HCT116 (cell line): ENCODE measurements at regions of chr21 and their contacts with region 1.

Region 1: DNA sequence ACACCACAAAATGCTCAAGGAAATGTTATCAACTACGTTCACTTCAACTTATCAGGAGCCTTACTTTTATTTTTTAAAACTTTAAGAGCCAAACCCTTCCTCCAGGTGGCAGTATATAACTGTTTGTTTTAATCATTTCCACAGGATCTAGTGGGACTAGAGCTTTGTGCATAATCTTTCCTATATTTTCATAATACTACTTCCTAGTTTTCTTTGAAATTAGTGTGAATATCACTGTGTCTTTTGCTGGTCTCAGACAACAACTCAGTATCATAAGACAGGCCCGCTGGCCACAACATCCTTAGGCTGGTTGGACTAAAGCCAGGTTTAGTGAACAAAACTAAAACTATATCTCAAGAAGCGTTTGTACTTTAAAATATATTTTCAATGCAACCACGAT is 145.5 kb downstream of the TIAM1 start:
- DNase-seq: peak; percentile 48
- ATAC-seq: peak; percentile 76
- H3K4me3 ChIP-seq: no peak overlapping the region
- H3K27ac ChIP-seq: no peak overlapping the region
- H3K4me1 ChIP-seq: peaks cover 13% of the 10 kb centered on the region in 2 experiments
- H3K27me3 ChIP-seq: no peaks in the 10 kb centered on the region
- CTCF ChIP-seq: peak; percentile 48 to 71 (median 62); a peak in 5 of 6 replicates
- POLR2A ChIP-seq: no peak
- RAD21 ChIP-seq: peak; percentile 78

Region 2: DNA sequence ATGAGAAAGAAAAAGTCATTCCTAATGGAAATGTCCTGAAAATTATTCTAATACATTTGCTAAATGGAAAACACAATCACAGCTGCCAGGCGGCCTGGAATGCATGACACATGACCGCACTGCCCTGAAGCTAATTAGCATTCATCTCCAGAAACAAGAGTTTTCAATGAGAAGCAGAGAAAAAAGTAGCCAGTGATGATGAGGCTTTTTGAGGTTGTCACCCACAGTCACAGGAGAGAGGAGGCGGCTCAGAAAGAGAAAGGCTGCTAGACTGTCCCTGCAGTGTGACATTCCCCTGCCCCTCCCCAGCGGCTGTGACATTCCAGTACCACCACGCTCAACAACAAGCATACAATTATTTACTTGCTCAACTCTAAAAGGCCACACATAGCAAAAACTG is 37.4 kb before region 1 on chr21:
- CTCF ChIA-PET with region 1: no interaction called
- POLR2A ChIA-PET with region 1: no interaction called
- RAD21 ChIA-PET with region 1: no interaction called
- intact Hi-C with region 1: no loop called
- DNase-seq: no peak
- ATAC-seq: no peak
- H3K4me3 ChIP-seq: no peak overlapping the region
- H3K27ac ChIP-seq: no peak overlapping the region
- H3K4me1 ChIP-seq: no peaks in the 10 kb centered on the region
- H3K27me3 ChIP-seq: no peaks in the 10 kb centered on the region
- CTCF ChIP-seq: no peak
- POLR2A ChIP-seq: no peak
- RAD21 ChIP-seq: no peak

Region 3: GRCh38 chr21:31293986-31294385 is 95.4 kb after region 1 on chr21:
- CTCF ChIA-PET with region 1: no interaction called
- POLR2A ChIA-PET with region 1: no interaction called
- RAD21 ChIA-PET with region 1: no interaction called
- intact Hi-C with region 1: no loop called
- DNase-seq: peak; percentile 64
- ATAC-seq: peak; percentile 87
- H3K4me3 ChIP-seq: peak overlapping the region in 1 of 2 experiments; percentile 17; a peak in 2 of 4 replicates
- H3K27ac ChIP-seq: peak overlapping the region; percentile 48
- H3K4me1 ChIP-seq: peaks cover 14 to 35% of the 10 kb centered on the region in 2 experiments
- H3K27me3 ChIP-seq: no peaks in the 10 kb centered on the region
- CTCF ChIP-seq: no peak
- POLR2A ChIP-seq: no peak
- RAD21 ChIP-seq: no peak

Region 4: DNA sequence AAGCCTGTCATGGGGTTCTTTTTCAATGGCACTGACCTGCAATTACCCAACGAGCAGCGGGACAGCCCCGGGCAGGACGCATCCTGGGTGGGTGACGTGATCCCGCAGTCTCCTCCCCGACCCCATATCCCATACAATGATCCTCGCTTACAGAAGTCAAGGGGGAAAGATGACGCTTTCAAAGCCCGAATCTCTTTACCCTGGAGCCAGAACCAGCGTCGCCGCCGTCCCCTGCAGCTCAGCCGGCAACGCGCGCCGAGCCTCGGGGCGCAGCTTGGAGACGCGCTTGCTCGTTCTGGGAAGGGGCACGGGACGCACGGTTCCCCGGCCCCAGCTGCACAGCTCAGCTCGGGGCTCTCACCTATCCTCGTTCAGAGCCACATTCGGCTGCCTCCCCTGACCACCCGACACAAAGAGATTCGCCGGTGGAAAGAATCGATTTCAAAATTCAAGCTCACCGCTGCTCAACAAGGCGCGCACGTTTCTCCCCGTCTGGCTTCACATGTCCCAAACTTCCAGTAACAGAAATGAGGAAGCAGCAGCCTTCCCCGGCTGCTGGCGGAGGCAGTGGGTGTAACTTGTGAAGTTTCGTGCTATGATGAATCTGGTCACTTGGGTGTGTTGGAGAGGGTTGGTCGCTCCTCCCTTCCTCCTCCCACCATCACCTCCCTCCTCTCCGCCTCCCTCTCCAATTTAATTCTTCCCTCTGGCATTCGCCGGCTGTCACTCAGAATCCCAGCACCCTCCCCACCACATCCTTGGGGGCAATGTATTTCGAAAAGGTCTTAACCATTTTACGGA is 145.3 kb after region 1 on chr21 and contains the start of gene TIAM1:
- CTCF ChIA-PET with region 1: interaction called, 6 read pairs
- POLR2A ChIA-PET with region 1: no interaction called
- RAD21 ChIA-PET with region 1: no interaction called
- intact Hi-C with region 1: loop called (anchors 10 kb)
- DNase-seq: no peak
- ATAC-seq: peak; percentile 88
- H3K4me3 ChIP-seq: peak within 1 kb of the TSS; percentile 31 to 37
- H3K27ac ChIP-seq: peak within 1 kb of the TSS; percentile 5; the same call in 1 of the 2 replicates
- H3K4me1 ChIP-seq: peaks cover 27 to 43% of the 10 kb centered on the region in 2 experiments
- H3K27me3 ChIP-seq: no peaks in the 10 kb centered on the region
- CTCF ChIP-seq: no peak
- POLR2A ChIP-seq: no peak
- RAD21 ChIP-seq: no peak
- total RNA-seq, gene TIAM1: 47.8 TPM

Region 5: DNA sequence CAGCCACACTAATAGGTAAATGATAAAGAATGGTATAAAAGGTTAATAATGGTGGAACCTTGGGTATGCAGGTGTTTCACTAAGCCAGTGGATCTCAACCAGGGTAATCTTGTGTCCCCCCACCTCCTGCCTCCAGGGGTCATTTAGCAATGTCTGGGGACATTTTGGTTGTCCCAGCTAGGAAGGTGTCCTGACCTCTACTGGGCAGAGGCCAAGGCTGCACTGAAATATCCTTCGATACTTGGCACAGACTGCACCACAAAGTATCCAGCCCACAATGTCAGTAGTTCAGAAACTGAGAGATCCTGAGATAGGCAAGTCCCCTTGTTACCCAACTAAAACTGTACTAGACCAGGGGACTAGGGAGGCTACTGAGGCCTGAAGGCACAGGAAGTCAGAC is 259.1 kb after region 1 on chr21:
- CTCF ChIA-PET with region 1: interaction called, 3 read pairs
- POLR2A ChIA-PET with region 1: no interaction called
- RAD21 ChIA-PET with region 1: no interaction called
- intact Hi-C with region 1: loop called (anchors 5 kb)
- DNase-seq: no peak
- ATAC-seq: peak; percentile 64
- H3K4me3 ChIP-seq: no peak overlapping the region
- H3K27ac ChIP-seq: no peak overlapping the region
- H3K4me1 ChIP-seq: peaks cover 7 to 17% of the 10 kb centered on the region in 2 experiments; a peak in 2 of 4 replicates
- H3K27me3 ChIP-seq: no peaks in the 10 kb centered on the region
- CTCF ChIP-seq: peak; percentile 22 to 61 (median 53); a peak in 5 of 6 replicates
- POLR2A ChIP-seq: no peak
- RAD21 ChIP-seq: no peak; the same call in 1 of the 2 replicates

Region 6: GRCh38 chr21:31509194-31510017 is 310.8 kb after region 1 on chr21:
- CTCF ChIA-PET with region 1: no interaction called
- POLR2A ChIA-PET with region 1: no interaction called
- RAD21 ChIA-PET with region 1: no interaction called
- intact Hi-C with region 1: loop called (anchors 1 kb)
- DNase-seq: peak; percentile 67
- ATAC-seq: peak; percentile 85
- H3K4me3 ChIP-seq: peak overlapping the region in 1 of 2 experiments; percentile 41; a peak in 2 of 4 replicates
- H3K27ac ChIP-seq: peak overlapping the region; percentile 69
- H3K4me1 ChIP-seq: peaks cover 43 to 59% of the 10 kb centered on the region in 2 experiments
- H3K27me3 ChIP-seq: no peaks in the 10 kb centered on the region
- CTCF ChIP-seq: peak; percentile 60 to 78 (median 77); a peak in 5 of 6 replicates
- POLR2A ChIP-seq: no peak
- RAD21 ChIP-seq: peak; percentile 59

Region 7: GRCh38 chr21:31604591-31605190 is 406.1 kb after region 1 on chr21:
- CTCF ChIA-PET with region 1: interaction called, 9 read pairs
- POLR2A ChIA-PET with region 1: no interaction called
- RAD21 ChIA-PET with region 1: no interaction called
- intact Hi-C with region 1: loop called (anchors 1 kb)
- DNase-seq: peak; percentile 45
- ATAC-seq: peak; percentile 92
- H3K4me3 ChIP-seq: no peak overlapping the region
- H3K27ac ChIP-seq: no peak overlapping the region
- H3K4me1 ChIP-seq: peaks cover 8 to 10% of the 10 kb centered on the region in 2 experiments; a peak in 3 of 4 replicates
- H3K27me3 ChIP-seq: no peaks in the 10 kb centered on the region
- CTCF ChIP-seq: peak; percentile 74 to 94 (median 74)
- POLR2A ChIP-seq: no peak
- RAD21 ChIP-seq: peak; percentile 89